Activated naive CD4-positive, alpha-beta T cell treated with anti-CD3 and anti-CD28 coated beads for 36 hours (primary cell): ENCODE measurements at regions of chr4 and their contacts with region 1.

Region 1: GRCh38 chr4:53132132-53132896 is 233.5 kb downstream of the SCFD2 start:
- DNase-seq: peak; percentile 61
- H3K4me3 Mint-ChIP-seq: no peak overlapping the region
- H3K27ac Mint-ChIP-seq: peak overlapping the region; percentile 83
- H3K4me1 Mint-ChIP-seq: peaks cover 36% of the 10 kb centered on the region
- H3K27me3 Mint-ChIP-seq: no peaks in the 10 kb centered on the region

Region 2: GRCh38 chr4:52643785-52644244 is 488.5 kb before region 1 on chr4:
- CTCF ChIA-PET with region 1: no interaction called
- intact Hi-C with region 1: loop called (anchors 10 kb)
- DNase-seq: no peak
- H3K4me3 Mint-ChIP-seq: no peak overlapping the region
- H3K27ac Mint-ChIP-seq: no peak overlapping the region
- H3K4me1 Mint-ChIP-seq: peaks cover 12% of the 10 kb centered on the region
- H3K27me3 Mint-ChIP-seq: no peaks in the 10 kb centered on the region

Region 3: GRCh38 chr4:53101191-53101581 is 31.1 kb before region 1 on chr4:
- CTCF ChIA-PET with region 1: no interaction called
- intact Hi-C with region 1: loop called (anchors 1 kb)
- DNase-seq: no peak
- H3K4me3 Mint-ChIP-seq: no peak overlapping the region
- H3K27ac Mint-ChIP-seq: peak overlapping the region; percentile 55
- H3K4me1 Mint-ChIP-seq: peaks cover 13% of the 10 kb centered on the region
- H3K27me3 Mint-ChIP-seq: no peaks in the 10 kb centered on the region

Region 4: DNA sequence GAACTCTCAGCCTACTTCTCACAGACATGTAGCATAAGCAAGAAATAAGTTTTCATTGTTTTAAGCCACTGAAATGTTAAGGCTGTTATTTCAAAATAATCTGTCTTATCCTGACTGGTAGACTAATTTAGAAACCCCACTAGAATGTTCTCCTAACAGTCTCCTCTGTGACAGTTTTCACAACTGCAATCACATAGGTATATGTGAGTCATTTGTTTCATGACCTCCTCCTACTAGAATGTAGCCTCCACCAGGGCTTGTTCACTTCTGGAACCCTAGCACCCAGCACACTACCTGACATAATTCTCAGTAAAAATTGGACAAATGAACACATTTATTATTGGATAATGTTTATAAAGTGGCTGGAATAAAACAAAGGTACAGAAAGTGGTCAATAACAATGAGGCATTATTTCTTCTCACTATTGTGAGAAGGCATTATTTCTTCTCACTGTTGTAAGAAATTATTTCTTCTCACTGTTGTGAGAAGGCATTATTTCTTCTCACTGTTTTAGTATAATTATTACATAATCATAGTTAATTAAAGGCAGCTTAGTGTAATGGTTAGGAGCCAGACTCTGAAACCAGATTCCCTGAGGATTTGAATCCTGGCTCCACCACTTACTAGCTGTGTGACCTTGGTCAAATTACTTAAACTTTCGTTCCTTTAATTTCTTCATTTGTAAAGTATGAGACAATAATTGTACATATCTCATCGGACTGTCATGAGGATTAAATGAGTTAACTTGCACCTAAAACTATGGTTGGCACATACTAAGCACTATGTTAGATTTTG is 18.7 kb before region 1 on chr4:
- CTCF ChIA-PET with region 1: no interaction called
- intact Hi-C with region 1: loop called (anchors 1 kb)
- DNase-seq: peak; percentile 44
- H3K4me3 Mint-ChIP-seq: no peak overlapping the region
- H3K27ac Mint-ChIP-seq: peak overlapping the region; percentile 90
- H3K4me1 Mint-ChIP-seq: peaks cover 49% of the 10 kb centered on the region
- H3K27me3 Mint-ChIP-seq: no peaks in the 10 kb centered on the region

Region 5: GRCh38 chr4:53281438-53281837 is 149.1 kb after region 1 on chr4:
- CTCF ChIA-PET with region 1: no interaction called
- intact Hi-C with region 1: no loop called
- DNase-seq: no peak
- H3K4me3 Mint-ChIP-seq: no peak overlapping the region
- H3K27ac Mint-ChIP-seq: no peak overlapping the region
- H3K4me1 Mint-ChIP-seq: no peaks in the 10 kb centered on the region
- H3K27me3 Mint-ChIP-seq: no peaks in the 10 kb centered on the region

Region 6: DNA sequence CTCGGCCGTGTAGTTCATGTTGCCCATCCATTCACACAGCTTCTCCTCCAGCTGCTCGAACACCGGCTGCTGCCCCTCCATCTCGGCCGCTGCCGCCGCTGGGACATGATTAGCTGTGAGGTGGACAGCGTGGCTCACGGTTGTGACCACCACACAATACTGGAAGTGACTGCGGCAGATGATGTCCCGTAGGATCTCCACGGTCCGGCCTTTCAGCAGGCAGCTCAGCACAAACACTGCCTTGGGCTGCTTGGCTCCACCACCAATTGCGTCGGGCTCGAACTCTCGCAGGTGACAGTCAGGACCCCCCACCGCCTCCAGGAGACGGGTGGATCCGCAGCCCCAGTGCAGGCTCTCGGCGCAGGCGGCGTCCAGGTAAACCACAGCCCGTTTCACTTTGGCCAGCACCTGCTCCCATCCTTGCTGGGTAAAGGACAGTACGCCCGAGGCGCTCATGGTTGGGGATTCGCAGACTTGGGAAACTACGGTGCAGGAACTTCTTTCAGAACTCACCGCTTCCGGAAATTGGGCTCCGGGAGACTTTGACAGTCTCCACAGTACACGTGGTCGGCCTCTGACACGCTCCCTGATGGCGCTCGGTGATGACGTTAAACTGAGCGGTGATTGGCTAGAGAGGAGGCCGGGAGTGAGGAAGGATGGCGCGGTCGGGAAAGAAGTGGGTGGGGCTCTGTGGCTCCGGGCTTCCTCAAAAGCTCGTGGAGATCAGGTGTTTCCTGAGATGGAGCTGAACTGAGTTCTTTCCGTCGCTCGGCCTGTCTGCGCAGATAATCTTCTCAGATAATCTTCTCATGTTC is 233.4 kb after region 1 on chr4 and contains the start of gene SCFD2:
- CTCF ChIA-PET with region 1: no interaction called
- intact Hi-C with region 1: loop called (anchors 1 kb)
- DNase-seq: peak; percentile 99
- H3K4me3 Mint-ChIP-seq: peak within 1 kb of the TSS; percentile 96
- H3K27ac Mint-ChIP-seq: peak within 1 kb of the TSS; percentile 96
- H3K4me1 Mint-ChIP-seq: peaks cover 38% of the 10 kb centered on the region
- H3K27me3 Mint-ChIP-seq: peaks cover 3% of the 10 kb centered on the region
- total RNA-seq, gene SCFD2: 14.3 to 15.1 TPM